ENCODE measurements at regions of chr5 and their contacts with region 1.

Region 1: DNA sequence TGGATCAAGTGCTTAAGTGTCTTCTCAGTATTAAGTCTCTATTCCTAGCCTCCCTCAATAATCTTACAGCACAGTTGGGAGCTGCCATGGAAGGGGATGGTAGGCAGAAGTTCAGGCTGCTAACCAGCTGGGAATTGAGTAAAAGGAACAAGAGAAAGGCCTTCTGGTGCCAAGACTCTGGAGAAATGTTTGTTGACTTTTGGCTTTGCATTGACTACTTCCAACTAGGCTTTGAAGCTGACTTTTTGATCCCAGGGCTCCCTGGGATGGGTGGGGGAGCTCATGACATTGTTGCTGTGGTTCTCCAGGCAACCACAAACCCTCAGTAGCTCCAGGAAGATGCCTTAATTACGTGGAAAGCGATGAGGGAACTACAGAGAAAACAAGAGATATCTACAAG is 85.2 kb upstream of the HTR4 start:
- DNase-seq: no peak

Region 2: DNA sequence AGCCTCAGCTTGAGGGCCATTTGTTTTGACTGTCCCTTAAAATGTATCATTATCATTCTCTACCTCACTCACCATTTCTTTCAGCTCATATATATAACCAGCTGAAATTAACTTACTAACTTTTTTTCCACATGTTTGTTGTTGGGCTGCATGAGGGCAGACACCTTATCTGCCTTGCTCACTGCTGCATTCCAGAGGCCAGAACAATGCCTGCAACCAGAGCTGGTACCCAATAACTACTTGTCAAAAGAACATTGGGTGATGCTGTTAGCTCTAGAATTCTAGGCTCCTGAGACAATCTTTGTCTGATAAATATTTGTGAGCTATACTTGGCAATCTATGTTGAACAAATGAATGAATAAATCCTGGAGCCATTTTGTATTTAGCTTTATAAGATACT is 153.5 kb before region 1 on chr5:
- intact Hi-C with region 1: no loop called
- DNase-seq: no peak

Region 3: DNA sequence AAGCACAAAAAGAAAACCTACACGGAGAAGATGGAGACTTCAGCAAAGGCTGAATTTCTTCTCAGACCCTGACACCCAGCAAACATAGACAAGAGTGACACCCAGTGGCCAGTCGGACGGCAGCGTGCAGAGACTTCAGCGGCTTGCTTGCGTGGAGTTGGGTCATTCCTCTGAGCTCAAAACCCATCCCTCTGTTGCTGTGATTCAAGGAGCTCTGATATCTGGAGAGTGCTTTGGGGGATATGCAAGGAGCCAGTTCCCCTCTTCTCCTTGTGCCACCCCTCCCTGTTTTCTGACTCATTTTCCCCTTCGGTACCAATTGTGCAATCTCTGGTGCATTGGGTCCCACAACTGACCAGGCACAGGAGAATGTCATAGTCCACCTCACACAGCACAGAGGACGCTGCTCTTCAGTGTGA is 295.9 kb after region 1 on chr5:
- intact Hi-C with region 1: loop called (anchors 5 kb)
- DNase-seq: peak; percentile 70 to 93 (median 84)